Right ventricle myocardium superior (tissue), 1 donor: ENCODE measurements at regions of chr6 and their contacts with region 1.

Region 1: GRCh38 chr6:155528982-155529453 is 73.4 kb upstream of the NOX3 start:
- DNase-seq: no peak
- ATAC-seq: peak; percentile 68

Region 2: GRCh38 chr6:155333414-155333813 is 195.6 kb before region 1 on chr6:
- intact Hi-C with region 1: loop called (anchors 5 kb)
- DNase-seq: no peak
- ATAC-seq: no peak

Region 3: GRCh38 chr6:155483858-155484257 is 45.2 kb before region 1 on chr6:
- intact Hi-C with region 1: no loop called
- DNase-seq: no peak
- ATAC-seq: peak; percentile 68

Region 4: DNA sequence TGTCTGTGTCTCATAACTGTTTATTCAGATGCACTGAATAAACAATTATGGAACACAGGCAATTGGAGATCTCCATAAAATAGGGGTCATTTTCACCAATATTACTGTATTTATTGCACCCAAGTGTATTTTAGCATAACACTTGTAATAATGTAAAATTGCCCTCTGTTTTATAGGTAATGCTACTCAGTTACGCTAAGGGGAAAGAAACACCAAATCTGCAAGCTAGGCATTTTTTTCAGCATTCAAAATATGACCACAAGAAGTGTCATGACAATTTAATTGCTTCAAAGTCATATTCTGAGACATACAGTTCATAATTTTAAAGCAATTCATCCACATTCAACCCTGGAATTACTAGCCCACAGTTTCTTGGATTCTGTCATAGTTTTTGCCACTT is 569.8 kb after region 1 on chr6:
- intact Hi-C with region 1: no loop called
- DNase-seq: no peak
- ATAC-seq: no peak